ENCODE measurements at regions of chr15 and their contacts with region 1.

Region 1: GRCh38 chr15:93087825-93088199 is 1.2 kb downstream of the RGMA start:
- DNase-seq: peak; percentile 67
- H3K4me3 ChIP-seq: peak overlapping the region; percentile 40 to 50
- H3K27ac ChIP-seq: peak overlapping the region in 1 of 2 donors; percentile 53
- H3K4me1 ChIP-seq: no peaks in the 10 kb centered on the region
- H3K27me3 ChIP-seq: no peaks in the 10 kb centered on the region
- CTCF ChIP-seq: peak; percentile 86 to 95 (median 88)
- POLR2A ChIP-seq: no peak

Region 2: DNA sequence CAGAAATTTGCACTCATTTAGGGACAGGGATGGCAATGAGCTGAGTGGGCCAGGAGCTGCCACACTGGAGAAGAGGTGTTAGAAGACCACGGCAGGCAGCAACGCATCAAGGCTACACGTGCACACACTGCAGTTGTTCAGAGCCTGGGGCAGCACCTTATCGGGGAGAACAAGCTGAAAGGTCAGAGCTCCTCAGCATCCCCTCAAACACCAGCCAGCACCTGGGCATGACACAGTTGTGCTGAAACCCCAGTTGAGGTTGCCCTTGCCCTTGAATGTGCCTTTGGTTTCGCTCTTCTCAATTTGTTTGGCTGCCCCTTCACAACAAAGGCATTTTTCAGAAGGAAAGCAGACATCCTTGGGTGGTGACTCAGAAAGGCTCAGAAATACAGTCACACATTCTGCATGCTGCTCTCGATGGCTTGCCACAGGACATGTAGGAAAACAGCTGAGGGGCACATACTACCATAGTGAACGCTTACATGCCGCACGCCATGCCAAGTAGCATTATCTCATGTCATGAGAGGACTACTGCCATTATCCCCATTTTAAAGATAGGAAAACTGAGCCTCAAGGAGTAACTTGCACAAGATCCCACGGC is 636.5 kb before region 1 on chr15:
- intact Hi-C with region 1: no loop called
- DNase-seq: no peak
- H3K4me3 ChIP-seq: no peak overlapping the region
- H3K27ac ChIP-seq: no peak overlapping the region
- H3K4me1 ChIP-seq: no peaks in the 10 kb centered on the region
- H3K27me3 ChIP-seq: no peaks in the 10 kb centered on the region
- CTCF ChIP-seq: no peak
- POLR2A ChIP-seq: no peak

Region 3: GRCh38 chr15:92797168-92797951 is 290.5 kb before region 1 on chr15:
- intact Hi-C with region 1: loop called (anchors 5 kb)
- DNase-seq: peak; percentile 81
- H3K4me3 ChIP-seq: no peak overlapping the region
- H3K27ac ChIP-seq: peak overlapping the region; percentile 62 to 77
- H3K4me1 ChIP-seq: no peaks in the 10 kb centered on the region
- H3K27me3 ChIP-seq: no peaks in the 10 kb centered on the region
- CTCF ChIP-seq: peak; percentile 91 to 92 (median 92)
- POLR2A ChIP-seq: no peak

Region 4: DNA sequence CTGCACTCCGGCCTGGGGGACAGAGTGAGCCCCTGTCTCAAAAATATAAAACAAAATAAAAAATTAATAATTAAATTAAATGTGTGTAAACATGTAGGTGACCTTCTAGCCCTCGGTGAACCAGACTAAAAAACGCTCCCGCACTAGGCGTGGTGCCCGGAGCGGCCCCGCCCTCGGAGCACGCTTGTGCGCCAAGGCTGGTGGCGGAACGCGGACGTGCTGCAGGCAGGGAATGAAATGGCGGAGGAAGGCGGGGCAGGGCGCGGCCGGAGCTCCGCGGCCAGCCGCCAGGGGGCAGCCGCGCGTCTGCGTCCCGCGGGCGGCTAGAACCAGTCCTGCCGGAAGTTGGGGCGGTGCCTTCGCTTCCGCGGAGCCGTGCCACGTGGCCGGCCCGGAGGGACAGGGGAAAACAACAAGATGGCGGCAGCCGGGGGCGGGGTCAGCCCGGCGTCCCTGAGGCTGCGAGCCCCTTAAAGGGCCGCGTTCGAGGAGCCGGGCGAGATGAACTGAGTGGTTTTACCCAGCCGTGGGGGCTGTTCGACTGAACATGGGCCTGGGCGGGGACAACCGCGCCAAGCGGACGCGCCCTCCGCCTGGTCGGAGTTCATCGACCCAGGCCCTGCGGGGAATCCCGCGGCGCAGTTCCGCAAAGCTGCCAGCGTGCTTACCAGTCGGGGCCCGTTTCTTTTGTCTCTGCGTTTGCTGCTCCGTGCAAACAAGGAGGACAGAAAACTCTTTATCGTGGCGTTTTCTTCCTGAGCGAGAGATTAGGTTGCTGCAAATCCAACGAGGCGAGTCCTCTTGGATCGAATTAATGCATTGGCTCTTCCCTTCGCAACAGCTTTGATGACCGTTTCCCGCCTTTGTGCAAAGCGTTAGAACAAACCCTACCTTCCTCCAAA is 278.6 kb before region 1 on chr15:
- intact Hi-C with region 1: no loop called
- DNase-seq: peak; percentile 93
- H3K4me3 ChIP-seq: peak overlapping the region; percentile 34 to 48
- H3K27ac ChIP-seq: peak overlapping the region; percentile 98 to 99
- H3K4me1 ChIP-seq: no peaks in the 10 kb centered on the region
- H3K27me3 ChIP-seq: no peaks in the 10 kb centered on the region
- CTCF ChIP-seq: peak; percentile 98 to 100 (median 100)
- POLR2A ChIP-seq: peak; percentile 68

Region 5: DNA sequence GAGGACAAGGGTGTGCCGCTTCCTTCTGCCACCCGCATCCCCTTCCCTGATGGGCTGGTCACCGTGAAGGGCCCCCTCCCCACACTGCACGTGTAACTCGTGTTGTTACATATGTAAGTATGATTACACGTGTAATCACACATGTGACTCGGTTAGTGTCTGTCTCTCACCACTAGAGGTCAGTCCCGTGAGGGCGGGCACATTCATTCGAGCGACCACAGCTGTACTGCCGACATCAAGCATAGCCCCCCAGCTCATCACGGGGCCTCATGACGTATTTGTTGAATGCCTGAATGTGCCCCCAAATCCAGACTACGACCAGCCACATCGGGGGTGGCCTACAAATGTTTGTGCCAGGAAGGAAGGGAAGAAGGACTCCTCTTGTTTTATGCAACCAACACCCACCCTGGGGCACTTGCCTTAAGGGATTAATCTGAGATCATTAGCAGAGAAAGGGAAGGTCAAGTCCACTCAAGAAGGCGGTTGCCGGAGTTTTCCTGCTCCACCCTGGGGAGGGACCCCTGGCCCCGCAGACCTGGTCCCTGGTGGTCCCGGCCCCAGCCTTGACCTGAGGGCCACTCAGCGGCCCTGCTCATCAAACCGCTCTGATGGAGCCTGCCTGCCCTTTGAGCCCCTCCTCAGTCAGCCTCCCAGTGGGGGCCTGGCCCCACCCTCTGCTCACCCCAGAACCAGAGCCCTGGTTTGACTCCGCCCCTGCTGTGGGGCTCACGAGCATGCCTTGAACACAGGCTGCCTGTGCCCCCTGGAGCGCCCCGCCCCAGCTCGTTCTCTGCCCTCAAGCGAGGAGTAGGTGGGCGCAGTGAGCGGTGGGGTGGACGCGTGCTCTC is 51.6 kb before region 1 on chr15:
- intact Hi-C with region 1: loop called (anchors 5 kb)
- DNase-seq: no peak
- H3K4me3 ChIP-seq: no peak overlapping the region
- H3K27ac ChIP-seq: no peak overlapping the region
- H3K4me1 ChIP-seq: no peaks in the 10 kb centered on the region
- H3K27me3 ChIP-seq: no peaks in the 10 kb centered on the region
- CTCF ChIP-seq: peak; percentile 9 to 73 (median 45)
- POLR2A ChIP-seq: no peak

Region 6: DNA sequence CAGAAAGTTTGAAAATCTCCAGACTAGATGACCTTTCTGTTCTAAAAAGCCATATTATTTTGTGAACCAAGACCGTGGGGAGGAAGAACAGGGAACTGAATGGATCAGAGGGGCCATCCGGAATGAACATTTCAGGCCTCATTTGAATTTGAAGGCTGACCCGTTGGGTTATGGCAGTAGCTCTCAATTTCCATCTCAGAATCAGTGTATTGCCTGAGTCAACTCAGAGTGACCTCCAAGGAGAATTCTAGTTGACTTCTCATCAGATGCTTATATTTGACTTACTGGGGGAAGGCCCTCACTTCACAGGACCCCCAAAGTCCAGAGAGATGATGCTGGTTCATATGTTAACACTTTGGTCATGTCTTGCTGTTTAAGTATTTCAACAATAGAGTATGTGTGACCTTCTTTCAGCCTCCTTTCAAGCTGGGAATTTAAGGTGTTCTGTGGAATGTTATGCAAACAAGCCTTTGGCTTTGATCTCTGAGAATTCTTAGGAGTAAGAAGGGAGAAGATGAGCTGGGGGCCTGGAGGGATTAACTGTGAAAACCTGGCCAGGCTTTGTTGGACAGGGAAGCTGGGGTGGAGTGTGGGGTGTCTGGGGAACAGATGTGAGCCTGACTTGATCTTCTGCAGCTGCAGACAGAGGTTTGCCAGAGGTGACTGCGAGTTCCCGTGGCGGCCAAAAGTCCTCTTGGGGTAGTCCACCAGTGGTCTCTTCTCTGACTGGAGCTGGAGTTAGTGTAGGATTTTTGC is 112.4 kb after region 1 on chr15:
- intact Hi-C with region 1: no loop called
- DNase-seq: no peak
- H3K4me3 ChIP-seq: no peak overlapping the region
- H3K27ac ChIP-seq: no peak overlapping the region
- H3K4me1 ChIP-seq: no peaks in the 10 kb centered on the region
- H3K27me3 ChIP-seq: no peaks in the 10 kb centered on the region
- CTCF ChIP-seq: no peak
- POLR2A ChIP-seq: no peak

Region 7: GRCh38 chr15:93982226-93982727 is 894.5 kb after region 1 on chr15:
- intact Hi-C with region 1: loop called (anchors 10 kb)
- DNase-seq: no peak
- H3K4me3 ChIP-seq: no peak overlapping the region
- H3K27ac ChIP-seq: peak overlapping the region in 1 of 2 donors; percentile 9
- H3K4me1 ChIP-seq: no peaks in the 10 kb centered on the region
- H3K27me3 ChIP-seq: no peaks in the 10 kb centered on the region
- CTCF ChIP-seq: no peak
- POLR2A ChIP-seq: no peak

Measured in prostate gland (tissue), 2 donors.